ENCODE measurements at regions of chr16 and their contacts with region 1.

Region 1: DNA sequence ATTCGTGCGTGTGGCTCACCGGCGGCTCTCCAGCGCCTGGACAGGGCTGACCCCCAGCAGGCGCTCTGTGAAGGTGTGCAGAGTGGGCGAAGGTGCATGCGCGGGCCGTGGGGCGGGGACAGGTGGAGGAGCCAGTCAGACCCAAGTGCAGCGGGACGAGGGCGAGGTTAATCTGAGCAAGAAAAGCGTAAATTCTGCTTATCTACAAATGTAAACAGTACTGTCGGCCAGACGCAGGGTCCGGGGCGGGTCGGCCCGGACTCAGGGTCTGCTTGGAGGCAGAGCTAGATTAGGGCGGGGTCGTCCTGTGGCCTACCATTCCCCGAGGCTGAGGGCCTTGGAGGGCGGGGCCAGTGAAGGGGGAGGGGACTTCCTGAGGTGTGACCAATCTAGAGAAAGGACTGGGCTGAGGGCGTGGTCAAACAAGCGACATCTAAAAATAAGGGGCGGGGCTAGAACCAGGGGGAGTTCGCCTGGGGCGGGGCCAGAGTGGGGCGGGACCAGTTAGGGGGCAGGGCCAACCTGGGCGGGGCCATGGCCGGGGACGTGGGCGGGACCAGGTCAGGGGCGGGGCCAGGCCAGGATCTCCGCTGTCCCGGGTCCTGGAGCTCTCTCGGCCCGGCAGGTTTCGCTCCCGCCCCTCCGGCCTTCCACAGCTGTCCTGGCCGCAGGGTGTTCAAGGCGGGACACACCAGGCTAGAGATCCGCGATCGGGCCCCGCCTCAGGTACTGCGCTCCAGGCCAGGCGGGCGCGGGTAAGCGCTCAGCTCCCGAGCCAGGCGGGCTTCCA is at the start of gene SEC14L5:
- DNase-seq: peak; percentile 98 to 99 (median 99)
- H3K4me3 ChIP-seq: peak within 1 kb of the TSS in 2 of 4 donors; percentile 16 to 50
- H3K27ac ChIP-seq: peak within 1 kb of the TSS in 1 of 5 donors; percentile 33
- H3K4me1 ChIP-seq: peaks cover 0 to 4% of the 10 kb centered on the region in 2 donors
- H3K27me3 ChIP-seq: no peaks in the 10 kb centered on the region
- CTCF ChIP-seq: no peak
- POLR2A ChIP-seq: no peak
- total RNA-seq, gene SEC14L5: 0.12 to 1.8 (median 1.1) TPM

Region 2: GRCh38 chr16:4734063-4734729 is 223.7 kb before region 1 on chr16 and contains the starts of genes ANKS3 and DNAAF8:
- intact Hi-C with region 1: loop called in 1 of 2 experiments (anchors 10 kb)
- DNase-seq: peak; percentile 95 to 99 (median 98)
- H3K4me3 ChIP-seq: peak within 1 kb of the TSS; percentile 41 to 100 (median 82)
- H3K27ac ChIP-seq: peak within 1 kb of the TSS in 4 of 5 donors; percentile 42 to 87 (median 56)
- H3K4me1 ChIP-seq: peaks cover 4 to 10% of the 10 kb centered on the region in 2 donors
- H3K27me3 ChIP-seq: no peaks in the 10 kb centered on the region
- CTCF ChIP-seq: no peak
- POLR2A ChIP-seq: peak in 1 of 2 donors; percentile 19
- total RNA-seq, gene ANKS3: 12.3 to 34.4 (median 17.4) TPM
- total RNA-seq, gene DNAAF8: 0.30 to 3.3 (median 1.1) TPM

Region 3: GRCh38 chr16:4839942-4840341 is 118.0 kb before region 1 on chr16:
- intact Hi-C with region 1: loop called (anchors 5 to 10 kb)
- DNase-seq: peak in 1 of 7 donors; percentile 34
- H3K4me3 ChIP-seq: no peak overlapping the region
- H3K27ac ChIP-seq: no peak overlapping the region
- H3K4me1 ChIP-seq: peaks cover 0 to 5% of the 10 kb centered on the region in 2 donors
- H3K27me3 ChIP-seq: no peaks in the 10 kb centered on the region
- CTCF ChIP-seq: no peak
- POLR2A ChIP-seq: no peak

Region 4: GRCh38 chr16:4846891-4847773 is 110.8 kb before region 1 on chr16 and contains the starts of genes GLYR1 and UBN1:
- intact Hi-C with region 1: loop called in 1 of 2 experiments (anchors 10 kb)
- DNase-seq: peak; percentile 99 to 100 (median 100)
- H3K4me3 ChIP-seq: peak within 1 kb of the TSS; percentile 87 to 97 (median 92)
- H3K27ac ChIP-seq: peak within 1 kb of the TSS; percentile 85 to 99 (median 98)
- H3K4me1 ChIP-seq: peaks cover 26 to 51% of the 10 kb centered on the region in 2 donors
- H3K27me3 ChIP-seq: no peaks in the 10 kb centered on the region
- CTCF ChIP-seq: no peak
- POLR2A ChIP-seq: peak; percentile 59 to 96
- total RNA-seq, gene GLYR1: 43.2 to 118 (median 83.7) TPM
- total RNA-seq, gene UBN1: 14.6 to 60.8 (median 31.1) TPM

Region 5: GRCh38 chr16:5033256-5034169 is 75.6 kb after region 1 on chr16 and contains the start of gene NAGPA:
- intact Hi-C with region 1: loop called (anchors 5 to 10 kb)
- DNase-seq: peak; percentile 88 to 95 (median 90)
- H3K4me3 ChIP-seq: peak within 1 kb of the TSS; percentile 31 to 94 (median 50)
- H3K27ac ChIP-seq: peak within 1 kb of the TSS in 4 of 5 donors; percentile 60 to 84 (median 80)
- H3K4me1 ChIP-seq: peaks cover 0 to 16% of the 10 kb centered on the region in 2 donors
- H3K27me3 ChIP-seq: no peaks in the 10 kb centered on the region
- CTCF ChIP-seq: no peak
- POLR2A ChIP-seq: peak in 1 of 2 donors; percentile 44
- total RNA-seq, gene NAGPA: 6.9 to 47.8 (median 19.9) TPM

Region 6: GRCh38 chr16:5056352-5056751 is 98.4 kb after region 1 on chr16:
- intact Hi-C with region 1: no loop called
- DNase-seq: peak in 2 of 7 donors; percentile 31 to 36
- H3K4me3 ChIP-seq: no peak overlapping the region
- H3K27ac ChIP-seq: no peak overlapping the region
- H3K4me1 ChIP-seq: no peaks in the 10 kb centered on the region
- H3K27me3 ChIP-seq: no peaks in the 10 kb centered on the region
- CTCF ChIP-seq: peak in 5 of 6 experiments; percentile 13 to 31 (median 26)
- POLR2A ChIP-seq: no peak